Prostate gland (tissue), 2 donors: ENCODE measurements at regions of chr7 and their contacts with region 1.

Region 1: DNA sequence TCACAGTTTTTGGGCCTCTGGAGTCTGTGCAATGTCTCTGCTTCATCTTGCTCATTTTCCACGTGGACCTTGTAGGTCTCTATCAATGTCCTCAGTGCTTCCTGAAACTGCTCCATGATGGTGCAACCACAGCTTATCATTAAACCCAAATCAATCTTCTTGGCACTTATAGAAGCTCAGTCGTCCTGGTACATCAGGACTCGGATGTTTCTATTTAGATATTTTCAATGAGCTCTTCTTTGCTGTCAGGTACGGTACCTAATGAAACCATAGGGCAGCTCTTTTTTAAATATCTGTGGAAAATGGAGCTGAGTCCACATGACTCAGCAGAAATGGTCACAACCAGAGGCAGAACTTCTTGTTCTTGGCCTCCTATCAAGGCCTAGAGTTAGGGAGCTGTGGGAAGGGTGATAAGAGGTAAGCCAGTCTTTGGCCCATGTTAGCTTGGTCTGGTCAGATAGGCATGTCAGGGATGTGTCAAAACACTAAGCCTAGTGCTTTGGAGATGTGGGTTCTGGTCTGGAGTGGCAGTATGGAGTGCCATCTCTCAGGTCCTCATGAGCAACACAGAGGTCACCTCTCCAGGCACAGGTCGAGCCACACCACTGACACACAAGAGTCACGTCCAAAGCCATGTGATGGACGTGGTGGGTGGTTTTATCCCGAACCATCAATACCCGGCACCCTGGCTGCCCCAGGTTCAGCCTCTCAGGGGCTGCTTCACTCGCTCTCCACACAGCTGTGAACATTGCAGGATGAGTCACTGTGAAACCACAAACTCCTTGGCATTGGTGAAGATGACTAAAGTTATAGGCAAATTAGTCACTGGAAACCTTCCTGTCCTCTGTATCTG is 87.0 kb downstream of the TBXAS1 start:
- DNase-seq: peak; percentile 39
- H3K4me3 ChIP-seq: no peak overlapping the region
- H3K27ac ChIP-seq: peak overlapping the region; percentile 15 to 28
- H3K4me1 ChIP-seq: peaks cover 4% of the 10 kb centered on the region
- H3K27me3 ChIP-seq: no peaks in the 10 kb centered on the region
- CTCF ChIP-seq: no peak
- POLR2A ChIP-seq: no peak

Region 2: GRCh38 chr7:139854124-139854511 is 62.0 kb before region 1 on chr7:
- intact Hi-C with region 1: loop called (anchors 5 kb)
- DNase-seq: no peak
- H3K4me3 ChIP-seq: no peak overlapping the region
- H3K27ac ChIP-seq: peak overlapping the region; percentile 70 to 84
- H3K4me1 ChIP-seq: no peaks in the 10 kb centered on the region
- H3K27me3 ChIP-seq: no peaks in the 10 kb centered on the region
- CTCF ChIP-seq: no peak
- POLR2A ChIP-seq: no peak